ENCODE measurements at regions of chr3 and their contacts with region 1.

Region 1: GRCh38 chr3:160893207-160893606 is 137.2 kb downstream of the PPM1L start:
- DNase-seq: no peak
- ATAC-seq: peak in 1 of 4 donors; percentile 60
- H3K4me3 ChIP-seq: no peak overlapping the region
- H3K27ac ChIP-seq: no peak overlapping the region
- H3K4me1 ChIP-seq: no peaks in the 10 kb centered on the region
- H3K27me3 ChIP-seq: no peaks in the 10 kb centered on the region
- CTCF ChIP-seq: no peak

Region 2: DNA sequence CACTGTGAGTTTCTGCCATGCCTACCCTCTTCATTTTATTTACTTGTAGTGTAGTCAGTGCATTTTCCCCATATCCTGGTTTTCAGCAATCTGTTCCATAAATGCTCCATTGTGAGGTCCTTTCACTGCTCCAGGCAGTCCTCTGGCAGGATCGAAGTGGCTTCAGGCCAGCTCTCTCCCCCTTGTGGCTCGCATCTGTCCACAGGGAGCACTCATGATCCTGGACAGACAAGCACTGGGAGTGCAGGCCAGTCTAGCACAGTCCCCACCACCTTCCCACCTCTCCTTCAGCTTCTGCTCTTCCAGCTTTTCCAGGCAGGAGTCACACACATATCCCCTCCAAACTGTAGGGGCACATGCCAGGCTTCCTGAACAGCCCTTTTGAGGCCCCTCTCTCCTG is 36.4 kb after region 1 on chr3:
- intact Hi-C with region 1: loop called in 1 of 2 experiments (anchors 5 kb)
- DNase-seq: peak; percentile 30 to 76
- ATAC-seq: peak; percentile 76 to 88 (median 86)
- H3K4me3 ChIP-seq: no peak overlapping the region
- H3K27ac ChIP-seq: no peak overlapping the region
- H3K4me1 ChIP-seq: peaks cover 20% of the 10 kb centered on the region
- H3K27me3 ChIP-seq: no peaks in the 10 kb centered on the region
- CTCF ChIP-seq: peak; percentile 36

Region 3: GRCh38 chr3:160941885-160942494 is 48.8 kb after region 1 on chr3:
- intact Hi-C with region 1: no loop called
- DNase-seq: peak in 1 of 2 donors; percentile 16
- ATAC-seq: peak; percentile 81 to 92 (median 87)
- H3K4me3 ChIP-seq: no peak overlapping the region
- H3K27ac ChIP-seq: no peak overlapping the region
- H3K4me1 ChIP-seq: peaks cover 5% of the 10 kb centered on the region
- H3K27me3 ChIP-seq: no peaks in the 10 kb centered on the region
- CTCF ChIP-seq: peak; percentile 93

Measured in psoas muscle (tissue), 8 donors.